Common myeloid progenitor, CD34-positive (primary cell): ENCODE measurements at regions of chr9 and their contacts with region 1.

Region 1: DNA sequence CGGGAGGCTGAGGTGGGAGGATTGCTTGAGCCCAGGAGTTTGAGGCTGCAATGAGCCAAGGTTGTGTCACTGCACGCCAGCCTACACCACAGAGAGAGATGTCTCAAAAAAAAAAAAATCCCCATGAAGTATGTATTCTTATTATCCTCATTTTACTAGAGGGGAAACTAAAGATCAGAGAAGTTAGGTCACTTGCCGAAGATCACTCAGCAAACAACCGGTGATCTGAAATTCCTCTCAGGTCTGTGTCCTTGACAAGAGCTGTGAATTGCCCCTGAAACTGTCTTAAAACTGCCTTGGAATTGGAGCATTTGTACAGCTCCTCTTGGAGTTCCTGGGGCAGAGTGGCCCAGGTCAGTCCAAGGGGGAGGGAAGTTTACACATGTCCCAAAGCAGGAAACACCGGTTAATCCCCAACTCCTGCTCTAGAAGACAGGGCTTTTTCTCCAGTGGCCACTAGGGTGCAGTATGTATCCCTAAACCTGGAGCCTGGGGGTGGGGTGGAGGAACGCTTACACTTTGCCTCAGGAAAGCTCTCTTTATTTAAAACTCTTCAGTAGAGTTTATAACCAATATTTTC is 27.6 kb downstream of the AQP7 start:
- DNase-seq: peak; percentile 75 to 86 (median 81)
- H3K4me3 ChIP-seq: peak overlapping the region in 4 of 7 experiments; percentile 26 to 65 (median 52)
- H3K27ac ChIP-seq: peak overlapping the region in 1 of 2 experiments; percentile 60
- H3K4me1 ChIP-seq: peaks cover 0 to 13% (median 9%) of the 10 kb centered on the region in 4 experiments
- H3K27me3 ChIP-seq: no peaks in the 10 kb centered on the region

Region 2: GRCh38 chr9:32877639-32878217 is 497.0 kb before region 1 on chr9:
- CTCF ChIA-PET with region 1: no interaction called
- POLR2A ChIA-PET with region 1: no interaction called
- DNase-seq: no peak
- H3K4me3 ChIP-seq: no peak overlapping the region
- H3K27ac ChIP-seq: no peak overlapping the region
- H3K4me1 ChIP-seq: no peaks in the 10 kb centered on the region
- H3K27me3 ChIP-seq: peaks cover 1 to 86% (median 33%) of the 10 kb centered on the region in 5 experiments

Region 3: DNA sequence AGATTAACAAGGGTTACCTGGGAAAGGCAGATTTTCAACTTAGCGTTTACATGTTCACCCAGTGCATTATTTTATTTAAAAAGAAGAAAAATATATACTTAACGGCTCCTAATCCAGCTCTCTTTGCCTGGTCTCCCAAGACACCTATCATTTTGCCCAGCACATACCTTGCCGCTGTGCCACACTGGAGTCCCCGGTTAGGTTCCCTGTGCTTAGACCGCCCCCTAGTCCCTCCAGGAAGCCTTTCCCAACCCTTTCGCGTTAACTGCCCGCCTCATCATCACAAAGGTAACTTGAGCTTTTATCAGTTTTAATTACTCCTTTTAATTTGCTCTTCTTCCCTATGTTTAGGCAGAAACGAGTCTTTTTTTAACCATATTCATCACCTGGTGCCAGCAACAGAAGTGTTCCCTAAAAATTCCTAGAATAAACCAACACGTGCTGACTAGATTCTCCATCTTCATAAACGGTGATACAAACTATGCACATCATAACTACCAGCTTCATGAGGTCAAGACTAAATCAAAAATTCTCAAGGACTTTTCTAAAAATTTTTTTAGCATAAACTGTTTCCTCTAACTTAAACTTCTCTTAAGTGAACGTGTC is 329.9 kb before region 1 on chr9:
- CTCF ChIA-PET with region 1: no interaction called
- POLR2A ChIA-PET with region 1: no interaction called
- DNase-seq: no peak
- H3K4me3 ChIP-seq: peak overlapping the region in 6 of 7 experiments; percentile 59 to 80 (median 66)
- H3K27ac ChIP-seq: no peak overlapping the region
- H3K4me1 ChIP-seq: peaks cover 7 to 16% (median 12%) of the 10 kb centered on the region in 4 experiments
- H3K27me3 ChIP-seq: no peaks in the 10 kb centered on the region

Region 4: DNA sequence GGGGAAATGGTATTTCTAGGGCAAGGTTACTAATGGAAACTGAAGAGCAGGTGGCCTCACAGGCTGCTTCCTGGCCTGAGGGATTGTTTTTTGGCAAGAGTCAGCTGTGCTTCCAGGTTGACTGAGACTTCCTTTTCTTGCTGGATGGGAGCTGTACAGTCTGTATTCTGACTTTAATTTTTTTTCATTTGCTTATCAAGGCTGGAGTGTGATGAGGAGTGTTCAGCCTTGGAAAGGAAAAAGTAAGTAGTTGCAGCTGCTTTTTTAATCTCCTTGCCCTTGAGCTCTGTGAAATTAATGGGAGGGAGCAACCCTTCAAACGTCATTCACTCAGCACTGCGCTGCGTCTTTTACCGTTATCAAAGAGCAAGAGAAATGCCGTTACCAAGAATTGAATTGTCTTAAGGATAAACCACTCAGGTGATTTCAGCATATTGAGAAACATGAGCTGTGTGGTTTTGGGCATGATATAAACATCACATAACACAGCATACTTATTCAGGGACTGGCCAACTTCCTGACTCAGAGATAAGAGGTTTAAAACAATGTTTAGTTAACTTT is 20.0 kb before region 1 on chr9:
- CTCF ChIA-PET with region 1: interaction called, 22 read pairs
- POLR2A ChIA-PET with region 1: no interaction called
- DNase-seq: peak in 2 of 3 donors; percentile 26 to 28
- H3K4me3 ChIP-seq: no peak overlapping the region
- H3K27ac ChIP-seq: peak overlapping the region in 1 of 2 experiments; percentile 54
- H3K4me1 ChIP-seq: peaks cover 2 to 13% (median 4%) of the 10 kb centered on the region in 4 experiments
- H3K27me3 ChIP-seq: no peaks in the 10 kb centered on the region

Region 5: GRCh38 chr9:33393581-33393980 is 18.9 kb after region 1 on chr9:
- CTCF ChIA-PET with region 1: interaction called, 11 read pairs
- POLR2A ChIA-PET with region 1: no interaction called
- DNase-seq: no peak
- H3K4me3 ChIP-seq: no peak overlapping the region
- H3K27ac ChIP-seq: no peak overlapping the region
- H3K4me1 ChIP-seq: no peaks in the 10 kb centered on the region
- H3K27me3 ChIP-seq: no peaks in the 10 kb centered on the region

Region 6: DNA sequence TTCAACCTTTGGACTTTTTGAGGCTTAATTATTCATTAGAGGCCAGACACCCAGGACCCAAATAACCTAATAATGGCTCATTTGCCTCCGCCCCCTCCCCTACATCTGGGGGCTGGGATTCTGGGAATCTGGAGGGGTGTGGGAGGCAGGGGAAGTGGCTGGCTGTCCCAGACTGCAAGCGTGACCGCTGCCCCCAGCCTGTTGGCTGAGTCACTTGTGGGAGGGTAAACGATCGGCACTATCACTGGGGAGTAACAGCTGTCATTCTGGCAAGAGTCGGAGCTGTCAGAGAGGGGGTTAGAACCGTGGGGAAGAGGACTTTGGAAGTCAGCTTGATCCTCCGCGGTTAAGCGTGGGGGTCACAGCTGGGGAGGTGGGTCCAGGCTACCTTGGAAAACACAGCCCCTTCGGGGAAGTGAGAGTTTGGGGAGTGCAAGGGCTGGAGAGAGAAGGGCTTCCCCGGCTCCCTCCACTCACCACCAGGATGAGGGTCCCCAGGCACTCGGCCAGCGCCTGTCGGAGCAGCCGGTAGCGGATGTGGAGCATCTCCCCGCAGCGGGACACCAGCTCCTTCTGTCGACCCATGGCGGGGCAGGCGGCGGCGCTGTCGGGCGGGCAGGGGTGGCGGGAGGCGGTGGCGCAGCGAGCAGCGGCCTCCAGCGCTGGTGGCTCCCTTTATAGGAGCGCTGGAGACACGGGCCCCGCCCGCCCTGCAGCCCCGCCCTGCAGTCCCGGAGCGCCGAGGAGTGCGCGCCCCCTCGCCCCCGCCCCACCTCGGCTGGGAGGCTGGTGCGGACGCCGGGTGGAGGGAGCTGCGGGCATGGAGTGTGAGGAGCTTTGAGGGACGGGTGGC is 72.4 kb after region 1 on chr9 and contains the start of gene AQP3:
- CTCF ChIA-PET with region 1: interaction called, 22 read pairs
- POLR2A ChIA-PET with region 1: interaction called, 3 read pairs
- DNase-seq: peak; percentile 41 to 73 (median 63)
- H3K4me3 ChIP-seq: peak within 1 kb of the TSS; percentile 9 to 73 (median 62)
- H3K27ac ChIP-seq: no peak within 1 kb of the TSS
- H3K4me1 ChIP-seq: peaks cover 3 to 42% (median 28%) of the 10 kb centered on the region in 4 experiments
- H3K27me3 ChIP-seq: peaks cover 0 to 6% (median 4%) of the 10 kb centered on the region in 5 experiments

Region 7: GRCh38 chr9:33466565-33467495 is 92.1 kb after region 1 on chr9:
- CTCF ChIA-PET with region 1: interaction called, 49 read pairs
- POLR2A ChIA-PET with region 1: interaction called, 3 read pairs
- DNase-seq: peak in 2 of 3 donors; percentile 43 to 50
- H3K4me3 ChIP-seq: no peak overlapping the region
- H3K27ac ChIP-seq: no peak overlapping the region
- H3K4me1 ChIP-seq: peaks cover 0 to under 1% (median 0%) of the 10 kb centered on the region in 4 experiments
- H3K27me3 ChIP-seq: no peaks in the 10 kb centered on the region